H1 (cell line): ENCODE measurements at regions of chr5 and their contacts with region 1.

Region 1: DNA sequence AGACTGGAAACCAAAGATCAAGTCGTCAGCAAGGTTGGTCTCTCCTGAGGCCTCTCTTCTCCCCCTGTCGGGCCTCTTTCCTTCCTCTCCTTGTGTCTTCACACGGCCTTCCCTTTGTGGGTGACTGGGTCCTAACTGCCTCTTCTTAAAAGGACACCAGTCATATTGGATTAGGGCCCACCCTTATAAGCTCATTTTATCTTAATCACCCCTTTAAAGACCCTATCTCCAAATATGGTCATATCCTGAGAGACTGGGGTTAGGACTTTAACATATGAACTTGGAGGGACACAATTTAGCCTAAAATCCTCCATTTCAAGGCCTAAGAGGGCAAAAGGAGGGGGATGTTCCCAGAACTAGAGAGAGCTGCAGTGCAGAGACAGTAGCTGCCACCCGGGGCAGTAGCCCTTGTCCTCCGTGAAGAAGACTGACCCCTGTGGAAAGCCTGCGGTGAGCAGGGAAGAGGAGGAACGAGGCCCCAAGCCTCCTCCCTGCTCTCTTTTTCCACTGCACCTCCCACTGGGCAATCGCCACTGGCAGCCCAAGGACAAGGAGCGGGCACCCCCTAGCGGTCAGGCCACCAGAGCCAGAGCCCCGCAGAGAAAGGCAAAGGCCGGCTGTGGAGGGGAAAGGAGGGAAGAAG is 34.9 kb downstream of the CFAP90 start:
- DNase-seq: peak; percentile 77 to 98
- H3K4me3 ChIP-seq: peak overlapping the region in 2 of 4 experiments; percentile 6 to 37; a peak in 2 of 8 replicates
- H3K27ac ChIP-seq: no peak overlapping the region
- H3K4me1 ChIP-seq: peaks cover 2 to 13% (median 6%) of the 10 kb centered on the region in 4 experiments; a peak in 6 of 7 replicates
- H3K27me3 ChIP-seq: no peaks in the 10 kb centered on the region
- CTCF ChIP-seq: peak; percentile 87 to 96 (median 91)
- EP300 ChIP-seq: peak in 1 of 2 experiments; percentile 52; a peak in 1 of 3 replicates
- POLR2A ChIP-seq: no peak
- RAD21 ChIP-seq: peak; percentile 84 to 89

Region 2: GRCh38 chr5:7437836-7438235 is 378.2 kb before region 1 on chr5:
- CTCF ChIA-PET with region 1: no interaction called
- POLR2A ChIA-PET with region 1: no interaction called
- DNase-seq: no peak
- H3K4me3 ChIP-seq: no peak overlapping the region
- H3K27ac ChIP-seq: no peak overlapping the region
- H3K4me1 ChIP-seq: no peaks in the 10 kb centered on the region
- H3K27me3 ChIP-seq: no peaks in the 10 kb centered on the region
- CTCF ChIP-seq: no peak
- EP300 ChIP-seq: no peak
- POLR2A ChIP-seq: no peak
- RAD21 ChIP-seq: no peak

Region 3: DNA sequence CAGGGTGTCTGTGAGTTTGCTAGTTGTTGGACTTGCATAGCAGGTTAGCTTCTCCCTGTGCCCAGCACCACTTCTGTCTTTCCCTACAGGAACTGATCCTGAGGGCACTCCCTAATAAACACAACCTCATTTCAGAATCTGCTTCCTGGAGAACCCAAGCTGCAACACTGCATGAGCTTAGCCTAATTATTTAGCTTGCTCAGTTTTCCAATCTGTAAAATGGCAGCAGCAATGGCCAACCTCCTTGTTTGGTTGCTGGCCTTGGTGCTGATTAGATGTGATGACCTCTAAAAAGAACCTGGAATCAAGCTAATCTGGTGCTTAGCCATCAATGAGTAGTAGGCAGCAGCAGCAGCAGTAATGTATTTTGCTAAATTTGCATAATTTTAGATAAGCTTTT is 286.1 kb before region 1 on chr5:
- CTCF ChIA-PET with region 1: no interaction called
- POLR2A ChIA-PET with region 1: no interaction called
- DNase-seq: no peak
- H3K4me3 ChIP-seq: no peak overlapping the region
- H3K27ac ChIP-seq: no peak overlapping the region
- H3K4me1 ChIP-seq: peaks cover 0 to 3% (median under 1%) of the 10 kb centered on the region in 4 experiments; a peak in 1 of 7 replicates
- H3K27me3 ChIP-seq: no peaks in the 10 kb centered on the region
- CTCF ChIP-seq: no peak
- EP300 ChIP-seq: no peak
- POLR2A ChIP-seq: no peak
- RAD21 ChIP-seq: no peak

Region 4: GRCh38 chr5:7671381-7671993 is 144.5 kb before region 1 on chr5:
- CTCF ChIA-PET with region 1: no interaction called
- POLR2A ChIA-PET with region 1: no interaction called
- DNase-seq: no peak
- H3K4me3 ChIP-seq: no peak overlapping the region
- H3K27ac ChIP-seq: no peak overlapping the region
- H3K4me1 ChIP-seq: no peaks in the 10 kb centered on the region
- H3K27me3 ChIP-seq: no peaks in the 10 kb centered on the region
- CTCF ChIP-seq: no peak
- EP300 ChIP-seq: no peak
- POLR2A ChIP-seq: no peak
- RAD21 ChIP-seq: no peak

Region 5: GRCh38 chr5:7754992-7755596 is 60.9 kb before region 1 on chr5:
- CTCF ChIA-PET with region 1: interaction called, 61 read pairs
- POLR2A ChIA-PET with region 1: no interaction called
- DNase-seq: peak; percentile 56 to 87
- H3K4me3 ChIP-seq: no peak overlapping the region
- H3K27ac ChIP-seq: no peak overlapping the region
- H3K4me1 ChIP-seq: no peaks in the 10 kb centered on the region
- H3K27me3 ChIP-seq: no peaks in the 10 kb centered on the region
- CTCF ChIP-seq: peak; percentile 86 to 99 (median 96)
- EP300 ChIP-seq: no peak
- POLR2A ChIP-seq: no peak
- RAD21 ChIP-seq: peak; percentile 83 to 89

Region 6: GRCh38 chr5:7805379-7805778 is 10.6 kb before region 1 on chr5:
- CTCF ChIA-PET with region 1: interaction called, 15 read pairs
- POLR2A ChIA-PET with region 1: interaction called, 3 read pairs
- DNase-seq: no peak
- H3K4me3 ChIP-seq: no peak overlapping the region
- H3K27ac ChIP-seq: no peak overlapping the region
- H3K4me1 ChIP-seq: no peaks in the 10 kb centered on the region
- H3K27me3 ChIP-seq: no peaks in the 10 kb centered on the region
- CTCF ChIP-seq: peak; percentile 42 to 44 (median 44)
- EP300 ChIP-seq: no peak
- POLR2A ChIP-seq: no peak
- RAD21 ChIP-seq: peak; percentile 47 to 49

Region 7: DNA sequence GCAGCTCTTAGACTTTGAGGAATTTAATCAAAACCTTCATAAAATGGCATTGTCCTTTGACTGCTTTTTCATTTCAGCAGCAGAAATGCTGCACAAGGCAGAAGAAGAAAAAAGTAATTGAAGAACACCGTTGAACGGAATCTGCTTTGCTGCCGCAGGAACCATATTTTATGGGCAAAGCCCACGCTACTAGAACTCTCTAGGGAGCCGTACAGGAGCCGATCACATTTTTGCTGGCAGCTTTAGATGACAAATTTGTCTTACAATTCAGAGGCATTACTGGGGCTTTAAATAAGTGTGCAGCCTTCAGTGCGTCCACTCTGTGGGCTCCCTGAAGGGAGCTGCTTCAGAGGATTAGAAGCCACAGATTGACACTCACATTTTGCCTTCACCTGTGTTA is 29.5 kb after region 1 on chr5:
- CTCF ChIA-PET with region 1: interaction called, 23 read pairs
- POLR2A ChIA-PET with region 1: interaction called, 3 read pairs
- DNase-seq: no peak
- H3K4me3 ChIP-seq: no peak overlapping the region
- H3K27ac ChIP-seq: no peak overlapping the region
- H3K4me1 ChIP-seq: peaks cover 0 to 5% (median 3%) of the 10 kb centered on the region in 4 experiments; a peak in 4 of 7 replicates
- H3K27me3 ChIP-seq: peaks cover 0 to 14% (median 8%) of the 10 kb centered on the region in 4 experiments; a peak in 4 of 7 replicates
- CTCF ChIP-seq: no peak
- EP300 ChIP-seq: no peak
- POLR2A ChIP-seq: no peak
- RAD21 ChIP-seq: no peak

Region 8: DNA sequence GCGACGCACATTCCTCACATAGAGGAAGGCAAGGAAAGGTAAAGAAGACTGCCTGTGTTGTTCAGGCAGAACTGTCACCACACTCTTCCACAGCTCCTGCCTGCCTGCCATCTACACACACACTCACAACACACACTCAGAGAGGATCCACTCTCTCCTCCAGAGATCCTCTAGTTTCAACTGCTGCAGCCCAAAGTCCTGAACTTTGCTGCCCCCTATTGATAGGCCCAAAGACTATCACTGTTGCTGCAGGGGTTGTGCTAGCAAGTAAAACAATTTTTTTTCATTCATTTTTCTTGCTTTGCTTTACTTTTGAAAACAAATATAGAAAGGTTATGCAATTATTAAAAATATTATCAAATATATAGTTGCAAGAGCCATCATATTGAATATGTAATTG is 40.8 kb after region 1 on chr5:
- CTCF ChIA-PET with region 1: interaction called, 23 read pairs
- POLR2A ChIA-PET with region 1: no interaction called
- DNase-seq: peak in 1 of 2 experiments; percentile 56
- H3K4me3 ChIP-seq: no peak overlapping the region
- H3K27ac ChIP-seq: no peak overlapping the region
- H3K4me1 ChIP-seq: no peaks in the 10 kb centered on the region
- H3K27me3 ChIP-seq: peaks cover 0 to under 1% (median 0%) of the 10 kb centered on the region in 4 experiments; a peak in 1 of 7 replicates
- CTCF ChIP-seq: peak; percentile 48 to 86 (median 86)
- EP300 ChIP-seq: no peak
- POLR2A ChIP-seq: no peak
- RAD21 ChIP-seq: peak; percentile 94 to 95

Region 9: DNA sequence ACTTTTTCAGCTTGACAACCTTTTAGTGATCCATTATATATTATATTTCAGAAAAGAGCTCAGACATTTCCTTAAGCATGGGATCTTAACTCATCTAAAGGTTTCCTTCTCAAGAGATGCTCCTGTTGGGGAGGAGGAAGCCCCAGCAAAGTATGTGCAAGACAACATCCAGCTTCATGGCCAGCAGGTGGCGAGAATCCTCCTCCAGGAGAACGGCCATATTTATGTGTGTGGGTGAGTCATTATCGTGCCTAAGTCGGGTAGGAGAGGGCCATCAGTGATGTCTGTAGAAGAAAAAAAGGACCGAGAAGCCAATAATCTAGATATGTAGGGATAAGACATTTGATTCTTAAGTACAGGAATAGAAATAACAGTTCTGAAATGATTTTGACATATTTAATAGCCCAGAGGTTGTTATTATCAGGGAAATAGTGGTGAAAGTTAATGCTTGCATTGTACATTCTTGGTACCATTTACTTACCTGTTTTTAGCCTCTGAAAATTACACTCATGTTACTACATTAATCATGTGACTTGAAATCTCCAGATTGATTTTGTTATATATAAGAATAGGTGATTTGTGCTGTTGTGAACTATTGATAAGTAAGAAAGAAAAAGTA is 81.1 kb after region 1 on chr5:
- CTCF ChIA-PET with region 1: no interaction called
- POLR2A ChIA-PET with region 1: no interaction called
- DNase-seq: peak in 1 of 2 experiments; percentile 9
- H3K4me3 ChIP-seq: no peak overlapping the region
- H3K27ac ChIP-seq: no peak overlapping the region
- H3K4me1 ChIP-seq: no peaks in the 10 kb centered on the region
- H3K27me3 ChIP-seq: no peaks in the 10 kb centered on the region
- CTCF ChIP-seq: peak; percentile 22 to 61 (median 57); a peak in 3 of 4 replicates
- EP300 ChIP-seq: no peak
- POLR2A ChIP-seq: no peak
- RAD21 ChIP-seq: peak; percentile 32 to 41; a peak in 3 of 4 replicates